GM12878 (cell line): ENCODE measurements at regions of chr10 and their contacts with region 1.

Region 1: DNA sequence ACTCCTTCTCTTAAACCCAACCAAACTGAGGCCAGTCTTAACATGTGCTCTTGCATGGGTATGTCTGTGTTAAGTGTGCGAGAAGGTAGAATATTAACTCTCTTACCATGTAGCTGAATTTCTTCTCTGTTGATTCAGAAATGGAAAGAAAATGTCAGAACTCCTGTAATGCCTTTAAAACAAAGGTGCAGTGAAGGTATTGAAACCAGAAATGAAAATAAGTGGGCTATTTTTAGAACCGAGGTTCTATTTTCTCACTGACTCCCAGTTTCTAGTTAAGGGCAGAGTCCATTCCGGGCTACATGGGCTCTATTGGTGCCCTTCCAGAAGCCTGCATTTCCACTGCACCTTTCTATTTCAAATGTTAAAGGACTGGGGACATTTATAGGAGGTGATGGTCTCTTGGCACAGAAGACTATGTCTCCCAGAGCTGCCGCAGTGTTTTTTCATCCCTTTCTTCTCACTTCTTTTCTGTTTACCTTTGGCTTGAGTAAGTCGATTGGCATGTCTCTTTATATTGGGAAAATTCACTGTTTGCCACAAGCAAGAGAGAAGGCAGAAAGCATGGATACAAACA is 174.9 kb downstream of the LRMDA start:
- DNase-seq: peak; percentile 64
- ATAC-seq: peak; percentile 81
- H3K4me3 ChIP-seq: no peak overlapping the region; the same call in 1 of the 2 replicates
- H3K27ac ChIP-seq: peak overlapping the region; percentile 36
- H3K4me1 ChIP-seq: peaks cover 4% of the 10 kb centered on the region
- H3K27me3 ChIP-seq: no peaks in the 10 kb centered on the region
- CTCF ChIP-seq: no peak
- EP300 ChIP-seq: peak; percentile 62 to 70; a peak in 2 of 4 replicates
- POLR2A ChIP-seq: no peak
- RAD21 ChIP-seq: no peak

Region 2: GRCh38 chr10:75508239-75508813 is 98.0 kb before region 1 on chr10:
- CTCF ChIA-PET with region 1: no interaction called
- POLR2A ChIA-PET with region 1: no interaction called
- RAD21 ChIA-PET with region 1: interaction called, 9 read pairs
- SMC1A ChIA-PET with region 1: interaction called, 13 read pairs
- in situ Hi-C with region 1: no loop called
- intact Hi-C with region 1: no loop called
- DNase-seq: no peak
- ATAC-seq: no peak
- H3K4me3 ChIP-seq: no peak overlapping the region
- H3K27ac ChIP-seq: no peak overlapping the region
- H3K4me1 ChIP-seq: peaks cover 12% of the 10 kb centered on the region
- H3K27me3 ChIP-seq: peaks cover 0 to 2% of the 10 kb centered on the region in 2 experiments; a peak in 1 of 4 replicates
- CTCF ChIP-seq: no peak
- EP300 ChIP-seq: no peak
- POLR2A ChIP-seq: no peak
- RAD21 ChIP-seq: no peak